ENCODE measurements at regions of chr12 and their contacts with region 1.

Region 1: GRCh38 chr12:57069523-57069922 is 9.1 kb downstream of the NEMP1 start:
- H3K4me3 Mint-ChIP-seq: no peak overlapping the region
- H3K27ac Mint-ChIP-seq: peak overlapping the region; percentile 85
- H3K4me1 Mint-ChIP-seq: peaks cover 55% of the 10 kb centered on the region
- H3K27me3 Mint-ChIP-seq: no peaks in the 10 kb centered on the region

Region 2: DNA sequence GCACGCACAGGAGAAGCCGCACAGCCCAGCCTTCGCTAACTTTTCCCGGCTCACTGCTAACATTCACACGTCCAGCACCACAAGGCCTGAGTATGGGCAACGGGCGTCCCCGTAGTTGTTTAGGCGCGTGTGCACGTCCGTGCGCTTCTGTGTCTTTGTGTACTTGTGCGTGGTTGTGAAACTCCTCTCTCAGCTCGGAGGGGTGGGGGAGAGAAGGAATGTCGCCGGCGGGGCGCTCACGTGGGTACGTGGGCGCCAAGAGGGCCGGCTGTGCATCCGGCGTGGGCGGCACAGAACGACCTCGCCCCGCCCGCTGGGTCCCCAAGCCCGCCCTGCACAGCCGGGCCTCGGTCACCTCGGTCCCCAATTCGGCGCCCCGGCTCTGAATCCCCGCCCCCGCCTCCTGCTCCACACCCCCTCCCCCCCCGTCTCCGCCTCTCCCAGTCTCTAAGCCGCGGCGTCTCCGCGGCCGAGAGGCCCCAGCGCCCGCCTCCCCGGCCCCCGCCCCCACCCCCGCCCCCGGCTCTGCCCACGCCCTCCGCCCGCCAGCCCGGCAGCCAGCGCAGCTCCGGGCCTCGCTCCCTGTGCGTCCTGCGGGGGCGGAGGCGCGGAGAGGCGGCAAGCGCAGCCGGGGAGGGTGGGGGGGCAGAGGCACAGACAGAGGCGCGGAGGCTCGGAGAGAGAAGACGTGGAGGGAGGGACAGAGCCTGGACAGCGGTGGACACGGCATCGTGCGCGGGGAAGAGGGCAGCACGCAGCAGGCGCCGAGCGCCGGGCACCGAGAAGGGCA is 19.1 kb after region 1 on chr12 and contains the start of gene NAB2:
- intact Hi-C with region 1: loop called (anchors 1 kb)
- H3K4me3 Mint-ChIP-seq: peak within 1 kb of the TSS; percentile 98
- H3K27ac Mint-ChIP-seq: peak within 1 kb of the TSS; percentile 99
- H3K4me1 Mint-ChIP-seq: peaks cover 72% of the 10 kb centered on the region
- H3K27me3 Mint-ChIP-seq: no peaks in the 10 kb centered on the region

Region 3: GRCh38 chr12:57111031-57111734 is 41.7 kb after region 1 on chr12 and contains the start of gene STAT6:
- intact Hi-C with region 1: loop called (anchors 1 kb)
- H3K4me3 Mint-ChIP-seq: peak within 1 kb of the TSS; percentile 98
- H3K27ac Mint-ChIP-seq: peak within 1 kb of the TSS; percentile 95
- H3K4me1 Mint-ChIP-seq: peaks cover 65% of the 10 kb centered on the region
- H3K27me3 Mint-ChIP-seq: peaks cover 1% of the 10 kb centered on the region

Region 4: DNA sequence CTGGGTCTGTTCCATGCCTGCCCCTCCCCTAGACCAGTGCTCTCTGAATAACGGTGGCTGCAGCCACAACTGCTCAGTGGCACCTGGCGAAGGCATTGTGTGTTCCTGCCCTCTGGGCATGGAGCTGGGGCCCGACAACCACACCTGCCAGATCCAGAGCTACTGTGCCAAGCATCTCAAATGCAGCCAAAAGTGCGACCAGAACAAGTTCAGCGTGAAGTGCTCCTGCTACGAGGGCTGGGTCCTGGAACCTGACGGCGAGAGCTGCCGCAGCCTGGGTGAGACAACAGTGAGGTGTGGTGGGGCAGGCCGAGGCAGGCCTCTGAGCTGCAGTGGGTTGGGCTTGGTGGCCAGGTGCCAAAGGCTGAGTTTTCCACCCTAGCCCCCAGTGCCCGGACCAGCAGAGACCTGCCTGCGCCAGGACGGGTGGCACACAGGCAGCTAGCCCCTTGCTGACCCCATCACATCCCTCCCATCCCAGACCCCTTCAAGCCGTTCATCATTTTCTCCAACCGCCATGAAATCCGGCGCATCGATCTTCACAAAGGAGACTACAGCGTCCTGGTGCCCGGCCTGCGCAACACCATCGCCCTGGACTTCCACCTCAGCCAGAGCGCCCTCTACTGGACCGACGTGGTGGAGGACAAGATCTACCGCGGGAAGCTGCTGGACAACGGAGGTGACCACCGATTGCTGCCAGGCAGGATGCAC is 106.1 kb after region 1 on chr12:
- intact Hi-C with region 1: loop called (anchors 2 kb)
- H3K4me3 Mint-ChIP-seq: no peak overlapping the region
- H3K27ac Mint-ChIP-seq: no peak overlapping the region
- H3K4me1 Mint-ChIP-seq: no peaks in the 10 kb centered on the region
- H3K27me3 Mint-ChIP-seq: no peaks in the 10 kb centered on the region

Region 5: DNA sequence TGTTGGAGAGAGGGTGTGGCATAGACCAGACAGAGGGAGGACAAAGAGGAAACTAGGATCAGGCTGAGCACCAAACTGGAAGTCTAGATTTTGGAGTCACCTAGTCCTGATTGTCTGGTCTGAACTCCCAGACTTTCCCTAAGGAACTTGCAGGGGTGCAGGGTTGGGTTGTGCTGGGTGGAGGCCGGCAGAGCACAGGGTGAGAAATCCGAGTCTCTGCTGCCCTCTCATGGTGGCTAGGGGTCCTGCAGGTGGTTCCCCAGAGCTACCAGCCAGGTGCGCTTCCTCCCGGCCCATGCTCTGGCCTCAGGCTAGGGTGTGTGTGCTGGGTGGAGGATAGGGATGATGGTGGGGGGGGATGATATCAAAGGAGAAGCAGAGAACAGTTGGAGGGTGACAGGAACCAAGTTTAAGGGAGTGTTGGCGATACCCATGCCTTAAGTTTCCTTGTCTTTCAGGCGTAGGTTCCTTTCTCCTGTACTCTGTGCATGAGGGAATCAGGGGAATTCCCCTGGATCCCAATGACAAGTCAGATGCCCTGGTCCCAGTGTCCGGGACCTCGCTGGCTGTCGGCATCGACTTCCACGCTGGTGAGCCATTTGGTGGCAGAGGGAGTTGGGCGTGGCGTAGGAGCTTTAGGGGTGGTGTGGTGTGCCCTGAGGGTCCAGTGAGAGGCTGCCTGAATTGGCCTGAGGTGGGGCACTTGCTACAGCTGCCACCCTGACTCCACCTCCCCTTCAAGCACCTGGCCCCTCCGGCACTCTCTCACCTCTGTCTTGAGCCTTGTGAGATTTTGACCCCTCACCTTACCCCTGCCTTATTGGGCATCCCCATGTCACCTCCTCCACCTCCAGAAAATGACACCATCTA is 113.6 kb after region 1 on chr12:
- intact Hi-C with region 1: loop called (anchors 2 kb)
- H3K4me3 Mint-ChIP-seq: no peak overlapping the region
- H3K27ac Mint-ChIP-seq: no peak overlapping the region
- H3K4me1 Mint-ChIP-seq: peaks cover 11% of the 10 kb centered on the region
- H3K27me3 Mint-ChIP-seq: no peaks in the 10 kb centered on the region

Measured in dendritic cell treated with granulocyte-macrophage colony-stimulating factor and Interleukin-4, amounts not matched to agents 40 ng/mL and 50 ng/mL, for 4 days (primary cell).